Activated naive CD4-positive, alpha-beta T cell treated with anti-CD3 and anti-CD28 coated beads for 36 hours (primary cell): ENCODE measurements at regions of chr5 and their contacts with region 1.

Region 1: GRCh38 chr5:115169487-115170133 is at the start of gene TRIM36:
- DNase-seq: peak; percentile 93
- H3K4me3 Mint-ChIP-seq: peak within 1 kb of the TSS; percentile 82
- H3K27ac Mint-ChIP-seq: no peak within 1 kb of the TSS
- H3K4me1 Mint-ChIP-seq: peaks cover 12% of the 10 kb centered on the region
- H3K27me3 Mint-ChIP-seq: peaks cover 66% of the 10 kb centered on the region
- total RNA-seq, gene TRIM36: 0.17 TPM in 1 of 2 experiments, not detected in the other

Region 2: DNA sequence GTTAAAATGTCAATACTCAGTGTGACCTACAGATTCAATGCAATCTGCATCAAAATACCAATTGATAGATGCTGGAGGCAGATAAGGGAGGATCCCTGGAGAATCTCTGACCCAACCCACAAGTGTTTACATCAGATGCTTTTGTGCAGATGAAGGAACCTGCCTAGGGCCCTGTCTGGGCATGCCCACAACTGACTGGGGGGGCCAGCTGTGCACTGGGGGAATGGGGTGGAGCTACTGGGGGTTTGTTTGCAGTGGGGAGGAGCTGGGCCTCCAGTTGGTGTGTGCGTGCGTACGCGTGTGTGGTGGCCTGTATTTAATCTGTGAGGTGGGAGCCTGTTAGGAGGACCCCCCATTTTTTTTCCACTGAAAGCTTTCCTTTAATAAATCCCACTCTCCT is 244.8 kb before region 1 on chr5:
- CTCF ChIA-PET with region 1: no interaction called
- intact Hi-C with region 1: no loop called
- DNase-seq: no peak
- H3K4me3 Mint-ChIP-seq: no peak overlapping the region
- H3K27ac Mint-ChIP-seq: no peak overlapping the region
- H3K4me1 Mint-ChIP-seq: no peaks in the 10 kb centered on the region
- H3K27me3 Mint-ChIP-seq: no peaks in the 10 kb centered on the region

Region 3: GRCh38 chr5:114989512-114989911 is 180.1 kb before region 1 on chr5:
- CTCF ChIA-PET with region 1: no interaction called
- intact Hi-C with region 1: no loop called
- DNase-seq: no peak
- H3K4me3 Mint-ChIP-seq: no peak overlapping the region
- H3K27ac Mint-ChIP-seq: no peak overlapping the region
- H3K4me1 Mint-ChIP-seq: no peaks in the 10 kb centered on the region
- H3K27me3 Mint-ChIP-seq: no peaks in the 10 kb centered on the region

Region 4: GRCh38 chr5:115180165-115180709 is 10.6 kb after region 1 on chr5:
- CTCF ChIA-PET with region 1: interaction called, 5 read pairs
- intact Hi-C with region 1: loop called (anchors 1 kb)
- DNase-seq: peak; percentile 27
- H3K4me3 Mint-ChIP-seq: peak overlapping the region; percentile 67
- H3K27ac Mint-ChIP-seq: no peak overlapping the region
- H3K4me1 Mint-ChIP-seq: peaks cover 3% of the 10 kb centered on the region
- H3K27me3 Mint-ChIP-seq: peaks cover 69% of the 10 kb centered on the region

Region 5: GRCh38 chr5:115209279-115209678 is 39.7 kb after region 1 on chr5:
- CTCF ChIA-PET with region 1: no interaction called
- intact Hi-C with region 1: loop called (anchors 5 kb)
- DNase-seq: peak; percentile 53
- H3K4me3 Mint-ChIP-seq: no peak overlapping the region
- H3K27ac Mint-ChIP-seq: no peak overlapping the region
- H3K4me1 Mint-ChIP-seq: peaks cover 8% of the 10 kb centered on the region
- H3K27me3 Mint-ChIP-seq: no peaks in the 10 kb centered on the region

Region 6: DNA sequence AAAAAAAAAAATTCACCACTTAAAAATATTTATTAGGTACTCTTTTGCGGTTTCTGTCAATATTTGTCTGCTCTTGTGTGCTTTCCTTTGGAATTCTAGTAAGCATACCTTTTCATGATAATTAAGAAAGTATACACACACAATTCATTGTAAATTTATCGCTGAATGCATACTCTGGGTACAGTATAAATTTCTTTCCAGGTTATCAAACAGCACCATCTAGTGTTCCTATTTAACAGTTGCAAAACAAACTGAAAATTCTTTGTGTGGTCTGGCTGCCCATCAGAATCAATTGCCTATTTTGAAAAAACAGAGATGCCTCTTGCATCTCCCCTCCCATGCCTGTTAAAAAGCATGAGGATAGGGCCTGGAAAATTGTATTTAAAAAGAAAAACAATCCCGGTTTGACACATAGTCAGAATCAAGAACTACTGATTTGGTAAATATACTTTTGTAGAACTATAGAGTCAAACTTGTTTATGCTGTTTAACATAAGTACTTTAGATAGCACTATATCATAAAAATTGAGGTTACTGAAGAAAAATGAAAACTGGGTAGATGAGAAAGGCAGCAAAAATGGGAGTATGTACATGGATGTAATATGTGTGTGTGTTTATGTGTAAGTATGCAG is 76.9 kb after region 1 on chr5:
- CTCF ChIA-PET with region 1: interaction called, 3 read pairs
- intact Hi-C with region 1: loop called (anchors 5 kb)
- DNase-seq: no peak
- H3K4me3 Mint-ChIP-seq: no peak overlapping the region
- H3K27ac Mint-ChIP-seq: no peak overlapping the region
- H3K4me1 Mint-ChIP-seq: peaks cover 25% of the 10 kb centered on the region
- H3K27me3 Mint-ChIP-seq: no peaks in the 10 kb centered on the region

Region 7: GRCh38 chr5:115262321-115263077 is 92.9 kb after region 1 on chr5 and contains the start of gene PGGT1B:
- CTCF ChIA-PET with region 1: no interaction called
- intact Hi-C with region 1: loop called (anchors 2 kb)
- DNase-seq: peak; percentile 82
- H3K4me3 Mint-ChIP-seq: peak within 1 kb of the TSS; percentile 92
- H3K27ac Mint-ChIP-seq: peak within 1 kb of the TSS; percentile 93
- H3K4me1 Mint-ChIP-seq: peaks cover 43% of the 10 kb centered on the region
- H3K27me3 Mint-ChIP-seq: no peaks in the 10 kb centered on the region
- total RNA-seq, gene PGGT1B: 35.8 to 37.4 TPM

Region 8: GRCh38 chr5:115296124-115297022 is 126.8 kb after region 1 on chr5 and contains the start of gene CCDC112:
- CTCF ChIA-PET with region 1: no interaction called
- intact Hi-C with region 1: loop called (anchors 1 kb)
- DNase-seq: peak; percentile 85
- H3K4me3 Mint-ChIP-seq: peak within 1 kb of the TSS; percentile 80
- H3K27ac Mint-ChIP-seq: no peak within 1 kb of the TSS
- H3K4me1 Mint-ChIP-seq: peaks cover 4% of the 10 kb centered on the region
- H3K27me3 Mint-ChIP-seq: peaks cover 3% of the 10 kb centered on the region
- total RNA-seq, gene CCDC112: 1.9 to 2.1 TPM

Region 9: GRCh38 chr5:115625579-115626444 is 456.2 kb after region 1 on chr5 and contains the start of gene TMED7:
- CTCF ChIA-PET with region 1: no interaction called
- intact Hi-C with region 1: loop called (anchors 1 kb)
- DNase-seq: peak; percentile 100
- H3K4me3 Mint-ChIP-seq: no peak within 1 kb of the TSS
- H3K27ac Mint-ChIP-seq: peak within 1 kb of the TSS; percentile 89
- H3K4me1 Mint-ChIP-seq: peaks cover 21% of the 10 kb centered on the region
- H3K27me3 Mint-ChIP-seq: no peaks in the 10 kb centered on the region
- total RNA-seq, gene TMED7: 34.6 to 35.4 TPM